Mammary epithelial cell (primary cell): ENCODE measurements at regions of chr2 and their contacts with region 1.

Region 1: DNA sequence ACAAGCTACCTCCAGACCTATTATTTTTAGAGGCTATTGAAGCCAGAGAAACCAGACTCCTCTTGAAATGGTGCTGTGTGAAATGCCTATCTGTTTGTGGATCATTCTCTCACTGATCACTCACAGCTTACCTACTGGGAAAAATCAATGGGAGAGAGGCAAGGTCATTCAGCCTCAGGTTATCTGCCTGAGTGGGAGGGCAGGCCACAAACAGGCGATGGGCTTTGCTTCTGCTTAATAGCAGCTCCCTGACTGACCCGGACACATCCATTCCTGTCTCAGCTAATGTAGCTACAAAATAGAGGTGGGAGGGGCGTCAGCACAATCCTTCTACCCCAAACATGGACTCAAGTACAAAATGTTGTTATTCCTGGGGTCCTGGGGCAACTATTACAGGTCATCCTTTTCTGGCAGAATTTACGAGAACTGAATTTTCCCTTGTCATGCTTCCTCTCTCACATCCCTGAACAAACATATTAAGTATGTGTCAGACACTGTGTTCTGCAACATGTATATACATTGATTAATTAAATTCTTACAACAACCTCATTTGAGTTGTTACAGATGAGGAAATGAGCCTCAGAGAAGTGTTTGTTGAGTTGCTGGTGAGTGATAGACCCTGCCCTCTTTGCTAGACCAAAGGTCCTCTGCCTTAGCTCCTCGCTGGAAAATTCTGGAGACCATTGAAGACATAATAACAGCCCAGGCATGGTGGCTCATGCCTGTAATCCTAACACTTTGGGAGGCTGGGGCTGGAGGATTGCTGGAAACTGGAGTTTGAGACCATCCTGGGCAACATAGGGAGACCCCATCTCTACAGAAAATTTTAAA is 60.5 kb downstream of the CDK15 start:
- DNase-seq: no peak
- H3K4me3 ChIP-seq: no peak overlapping the region
- H3K27ac ChIP-seq: no peak overlapping the region
- H3K4me1 ChIP-seq: peaks cover 4% of the 10 kb centered on the region
- H3K27me3 ChIP-seq: no peaks in the 10 kb centered on the region
- CTCF ChIP-seq: no peak

Region 2: DNA sequence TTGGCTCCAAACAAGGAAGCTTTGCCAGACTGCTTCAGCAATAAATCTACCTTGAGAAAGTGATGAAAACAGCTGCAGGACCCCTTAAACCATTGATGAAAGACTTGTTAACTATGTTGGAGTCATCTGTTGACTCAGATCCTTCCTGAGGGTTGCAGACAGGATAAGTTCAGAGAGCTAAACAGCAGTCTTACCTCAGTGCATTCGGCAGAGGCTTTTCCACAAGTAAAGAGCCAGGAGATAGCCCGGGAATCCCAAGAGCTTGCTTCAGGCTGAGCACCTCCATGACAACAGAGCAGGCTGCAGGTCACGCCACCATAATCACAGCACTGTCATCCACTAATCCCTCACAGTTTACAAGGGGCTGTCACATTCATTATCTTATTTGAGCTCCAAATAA is 229.9 kb after region 1 on chr2:
- CTCF ChIA-PET with region 1: no interaction called
- dilution Hi-C with region 1: no loop called
- in situ Hi-C with region 1: no loop called
- intact Hi-C with region 1: loop called (anchors 1 kb)
- DNase-seq: no peak
- H3K4me3 ChIP-seq: no peak overlapping the region
- H3K27ac ChIP-seq: no peak overlapping the region
- H3K4me1 ChIP-seq: no peaks in the 10 kb centered on the region
- H3K27me3 ChIP-seq: no peaks in the 10 kb centered on the region
- CTCF ChIP-seq: no peak